ENCODE measurements at regions of chr13 and their contacts with region 1.

Region 1: GRCh38 chr13:20495082-20496023 is 30.3 kb downstream of the CRYL1 start:
- DNase-seq: peak in 7 of 10 donors; percentile 44 to 81 (median 54)
- H3K4me3 ChIP-seq: peak overlapping the region in 40 of 59 donors; percentile 0 to 46 (median 22)
- H3K27ac ChIP-seq: peak overlapping the region; percentile 19 to 90 (median 75)
- H3K27me3 ChIP-seq: no peaks in the 10 kb centered on the region
- CTCF ChIP-seq: peak; percentile 82 to 99 (median 95)

Region 2: DNA sequence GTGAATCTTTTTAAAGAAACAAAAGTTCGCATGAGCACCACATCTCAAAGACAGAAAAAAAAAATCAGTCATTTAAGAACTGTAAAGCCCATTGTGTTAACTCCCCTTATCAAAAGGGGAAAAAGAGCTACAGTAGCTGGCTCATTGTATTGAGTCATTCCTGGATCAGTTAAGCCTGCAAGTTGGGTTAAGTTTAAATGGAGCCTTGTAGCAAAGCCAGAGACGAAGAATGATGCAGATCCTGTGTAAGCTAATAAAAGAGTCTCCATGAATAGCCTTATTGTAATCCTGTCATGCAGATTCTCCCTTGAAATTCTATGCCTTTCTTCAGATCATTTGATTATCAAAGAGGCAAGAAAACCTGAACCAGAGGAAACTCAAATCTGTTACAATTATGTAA is 53.5 kb before region 1 on chr13:
- intact Hi-C with region 1: no loop called
- DNase-seq: no peak
- H3K4me3 ChIP-seq: peak overlapping the region in 3 of 59 donors; percentile 1 to 28 (median 9)
- H3K27ac ChIP-seq: peak overlapping the region in 45 of 59 donors; percentile 1 to 81 (median 53)
- H3K27me3 ChIP-seq: no peaks in the 10 kb centered on the region
- CTCF ChIP-seq: no peak

Region 3: DNA sequence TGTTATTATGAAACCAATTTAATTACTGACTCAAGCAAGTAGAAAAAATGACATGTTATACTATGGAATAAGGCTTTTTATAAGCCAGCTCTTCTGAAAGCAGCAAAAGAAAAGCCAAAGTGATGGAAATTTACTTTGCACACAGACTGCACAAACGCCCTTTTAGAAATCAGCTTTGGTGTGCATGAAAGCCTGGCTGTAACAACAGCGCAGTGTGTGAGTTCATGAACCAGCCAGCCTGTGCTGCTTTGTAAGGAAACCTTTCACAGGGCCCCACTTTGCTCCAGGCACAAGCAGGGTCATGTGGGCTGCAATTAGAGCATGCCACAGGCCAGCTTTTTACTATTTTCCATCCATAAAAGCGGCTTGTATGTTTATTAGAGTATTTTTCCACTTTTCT is 58.0 kb after region 1 on chr13:
- intact Hi-C with region 1: loop called (anchors 5 kb)
- DNase-seq: peak; percentile 15 to 93 (median 83)
- H3K4me3 ChIP-seq: peak overlapping the region in 27 of 59 donors; percentile 1 to 51 (median 23)
- H3K27ac ChIP-seq: peak overlapping the region; percentile 52 to 100 (median 97)
- H3K27me3 ChIP-seq: no peaks in the 10 kb centered on the region
- CTCF ChIP-seq: peak in 11 of 56 donors; percentile 4 to 29 (median 15)

Region 4: DNA sequence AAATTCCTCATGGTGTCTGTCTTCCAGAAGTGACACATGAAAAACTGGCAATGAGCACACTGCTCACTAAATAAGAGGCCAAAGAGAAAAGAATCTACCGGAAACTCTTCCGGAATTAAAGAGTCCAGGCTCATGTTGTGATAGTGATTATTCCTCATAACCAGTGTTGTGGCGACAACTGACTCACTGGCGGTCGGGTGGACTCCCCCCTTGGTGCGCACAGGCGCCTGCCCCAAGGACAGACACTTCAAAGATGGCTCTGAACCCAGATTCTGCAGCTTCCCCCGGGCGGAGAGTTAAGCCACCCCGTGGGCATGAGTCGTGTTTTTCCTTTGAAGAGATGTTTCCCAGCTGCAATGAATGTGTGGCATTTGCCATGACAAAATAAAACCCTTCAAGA is 218.4 kb after region 1 on chr13:
- intact Hi-C with region 1: loop called in 1 of 2 experiments (anchors 2 kb)
- DNase-seq: peak in 3 of 10 donors; percentile 40 to 75 (median 59)
- H3K4me3 ChIP-seq: peak overlapping the region in 34 of 59 donors; percentile 0 to 62 (median 30)
- H3K27ac ChIP-seq: peak overlapping the region in 57 of 59 donors; percentile 8 to 89 (median 75)
- H3K27me3 ChIP-seq: no peaks in the 10 kb centered on the region
- CTCF ChIP-seq: peak in 8 of 56 donors; percentile 7 to 16 (median 10)

Region 5: DNA sequence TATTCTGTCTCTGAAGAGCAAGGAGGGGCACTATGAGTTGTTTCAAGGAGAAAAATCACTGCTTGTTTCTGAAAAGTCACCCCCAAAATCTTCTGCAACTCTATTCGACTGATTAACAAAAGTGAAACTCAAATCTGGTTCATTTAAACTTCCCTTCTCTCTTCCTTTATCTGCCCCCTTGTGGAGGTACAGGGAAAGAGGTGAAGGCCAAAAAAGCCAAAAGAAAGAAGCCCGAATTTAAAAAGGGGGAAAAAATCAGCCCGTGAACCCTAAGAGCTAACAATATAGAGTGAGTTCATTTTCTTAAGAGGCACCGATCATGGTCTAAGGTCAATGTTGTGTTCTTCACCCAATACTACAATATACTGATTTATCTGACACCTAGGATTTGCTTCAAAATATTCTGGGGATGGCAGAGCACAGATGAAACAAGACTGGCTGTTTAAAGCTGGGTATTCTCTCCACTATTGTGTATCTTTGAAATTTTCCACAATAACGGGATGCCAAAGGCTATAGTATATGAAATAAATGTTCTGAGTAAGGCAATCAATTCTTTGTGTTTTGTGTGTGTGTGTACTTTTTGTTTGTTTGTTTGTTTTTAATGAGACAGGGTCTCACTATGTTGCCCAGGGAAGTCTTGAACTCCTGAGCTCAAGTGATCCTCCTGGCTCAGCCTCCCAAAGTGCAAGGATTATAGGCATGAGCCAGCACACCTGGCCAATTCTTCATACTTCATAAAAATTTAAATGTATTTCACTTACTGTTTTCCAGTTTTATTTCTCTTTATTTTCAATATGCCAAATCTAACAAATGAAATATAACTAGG is 333.4 kb after region 1 on chr13:
- intact Hi-C with region 1: loop called (anchors 5 to 10 kb)
- DNase-seq: no peak
- H3K4me3 ChIP-seq: peak overlapping the region in 50 of 59 donors; percentile 8 to 59 (median 38)
- H3K27ac ChIP-seq: peak overlapping the region in 34 of 59 donors; percentile 1 to 66 (median 37)
- H3K27me3 ChIP-seq: no peaks in the 10 kb centered on the region
- CTCF ChIP-seq: peak; percentile 68 to 90 (median 83)

Region 6: DNA sequence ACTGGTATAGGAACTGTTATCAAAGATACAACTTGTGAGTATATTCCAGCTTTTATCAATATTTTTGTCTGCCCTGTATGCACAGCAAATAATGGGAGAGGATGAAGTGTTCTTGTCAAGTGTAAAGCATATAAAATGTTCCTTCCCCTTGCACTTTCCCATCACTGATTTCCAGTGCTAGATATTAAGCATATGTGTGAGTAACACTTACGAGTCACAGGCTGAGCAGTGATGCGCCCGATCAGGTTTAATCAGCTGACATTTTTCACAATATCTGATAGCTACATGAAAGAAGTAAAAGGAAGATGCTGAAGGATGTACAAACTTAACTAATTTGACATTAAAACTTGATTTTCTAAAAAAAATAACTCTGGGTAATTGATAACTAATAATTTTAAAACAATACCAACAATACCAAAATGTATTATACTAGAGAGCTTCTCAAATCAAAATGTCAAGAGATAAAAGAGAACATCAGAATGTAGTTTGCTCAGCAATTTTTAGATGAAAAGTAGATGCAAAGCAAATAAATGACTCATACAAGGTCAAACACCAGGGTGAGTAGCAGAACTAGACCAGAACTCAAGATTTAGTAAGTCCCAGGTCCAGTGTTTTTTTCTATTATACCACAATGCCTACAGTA is 907.4 kb after region 1 on chr13:
- intact Hi-C with region 1: no loop called
- DNase-seq: no peak
- H3K4me3 ChIP-seq: no peak overlapping the region
- H3K27ac ChIP-seq: peak overlapping the region in 12 of 59 donors; percentile 2 to 57 (median 22)
- H3K27me3 ChIP-seq: no peaks in the 10 kb centered on the region
- CTCF ChIP-seq: no peak

Measured in dorsolateral prefrontal cortex (tissue), 120 donors.